CD4-positive, alpha-beta T cell (primary cell): ENCODE measurements at regions of chr5 and their contacts with region 1.

Region 1: DNA sequence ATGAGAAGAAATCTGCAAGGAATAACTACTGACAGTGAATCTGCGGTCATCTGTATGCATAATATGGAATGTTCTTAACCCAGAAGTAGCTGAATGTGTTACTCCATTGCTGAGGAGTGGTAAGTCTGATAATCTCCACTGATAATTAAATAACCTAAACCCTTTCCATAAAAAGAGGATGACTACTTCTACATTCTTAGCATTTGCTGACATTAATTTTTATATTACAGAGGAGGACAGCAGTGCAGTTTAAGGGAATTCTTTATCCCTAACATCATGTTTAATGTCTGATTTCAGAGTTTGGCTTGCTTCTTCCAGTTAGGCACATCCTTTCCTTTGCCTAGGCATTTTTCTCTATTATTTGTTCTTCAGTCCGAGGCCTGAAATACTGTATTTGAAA is 52.2 kb downstream of the CDC42SE2 start:
- DNase-seq: no peak
- ATAC-seq: no peak
- H3K4me3 ChIP-seq: no peak overlapping the region
- H3K4me3 Mint-ChIP-seq: no peak overlapping the region
- H3K27ac ChIP-seq: no peak overlapping the region
- H3K27ac Mint-ChIP-seq: peak overlapping the region; percentile 33
- H3K4me1 ChIP-seq: peaks cover 49% of the 10 kb centered on the region
- H3K4me1 Mint-ChIP-seq: peaks cover 84% of the 10 kb centered on the region
- H3K27me3 ChIP-seq: no peaks in the 10 kb centered on the region
- H3K27me3 Mint-ChIP-seq: no peaks in the 10 kb centered on the region
- CTCF ChIP-seq: no peak

Region 2: GRCh38 chr5:131328536-131329285 is 12.7 kb after region 1 on chr5:
- CTCF ChIA-PET with region 1: interaction called, 7 read pairs
- POLR2A ChIA-PET with region 1: interaction called, 5 read pairs
- intact Hi-C with region 1: loop called in 1 of 2 experiments (anchors 2 kb)
- DNase-seq: no peak
- ATAC-seq: peak; percentile 24
- H3K4me3 ChIP-seq: no peak overlapping the region
- H3K4me3 Mint-ChIP-seq: peak overlapping the region; percentile 26
- H3K27ac ChIP-seq: no peak overlapping the region
- H3K27ac Mint-ChIP-seq: peak overlapping the region; percentile 26
- H3K4me1 ChIP-seq: peaks cover 31% of the 10 kb centered on the region
- H3K4me1 Mint-ChIP-seq: peaks cover 84% of the 10 kb centered on the region
- H3K27me3 ChIP-seq: no peaks in the 10 kb centered on the region
- H3K27me3 Mint-ChIP-seq: no peaks in the 10 kb centered on the region
- CTCF ChIP-seq: no peak